ENCODE measurements at regions of chr3 and their contacts with region 1.

Region 1: GRCh38 chr3:184561061-184561912 is at the start of gene EPHB3:
- DNase-seq: peak; percentile 99
- H3K4me3 ChIP-seq: peak within 1 kb of the TSS; percentile 67
- H3K27ac ChIP-seq: no peak within 1 kb of the TSS
- H3K27me3 ChIP-seq: peaks cover 32% of the 10 kb centered on the region
- CTCF ChIP-seq: peak; percentile 100
- polyA plus RNA-seq, gene EPHB3: 1.9 TPM in 2 replicates

Region 2: DNA sequence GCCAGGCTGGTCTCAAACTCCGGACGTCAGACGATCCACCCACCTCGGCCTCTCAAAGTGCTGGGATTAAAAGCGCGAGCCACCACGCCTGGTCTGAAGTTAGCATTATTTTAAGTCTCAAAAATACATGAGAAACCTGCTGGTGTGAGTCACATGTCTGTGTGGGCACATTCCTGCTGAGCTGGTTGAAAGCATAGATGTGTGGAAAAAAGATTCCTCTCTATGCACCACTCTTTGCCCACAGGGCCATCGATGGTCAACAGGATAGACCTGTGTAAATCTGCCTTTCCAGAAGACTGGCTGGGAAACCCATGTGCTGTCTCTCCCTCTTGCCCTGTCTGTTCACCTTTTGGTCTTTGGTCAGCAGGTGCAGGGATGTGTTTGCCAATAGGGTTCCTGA is 117.9 kb before region 1 on chr3:
- CTCF ChIA-PET with region 1: no interaction called
- POLR2A ChIA-PET with region 1: no interaction called
- DNase-seq: no peak
- H3K4me3 ChIP-seq: no peak overlapping the region
- H3K27ac ChIP-seq: no peak overlapping the region
- H3K27me3 ChIP-seq: peaks cover 9% of the 10 kb centered on the region
- CTCF ChIP-seq: no peak

Region 3: GRCh38 chr3:184532940-184533732 is 28.2 kb before region 1 on chr3:
- CTCF ChIA-PET with region 1: no interaction called
- POLR2A ChIA-PET with region 1: no interaction called
- DNase-seq: no peak
- H3K4me3 ChIP-seq: no peak overlapping the region
- H3K27ac ChIP-seq: no peak overlapping the region
- H3K27me3 ChIP-seq: peaks cover 48% of the 10 kb centered on the region
- CTCF ChIP-seq: no peak

Region 4: DNA sequence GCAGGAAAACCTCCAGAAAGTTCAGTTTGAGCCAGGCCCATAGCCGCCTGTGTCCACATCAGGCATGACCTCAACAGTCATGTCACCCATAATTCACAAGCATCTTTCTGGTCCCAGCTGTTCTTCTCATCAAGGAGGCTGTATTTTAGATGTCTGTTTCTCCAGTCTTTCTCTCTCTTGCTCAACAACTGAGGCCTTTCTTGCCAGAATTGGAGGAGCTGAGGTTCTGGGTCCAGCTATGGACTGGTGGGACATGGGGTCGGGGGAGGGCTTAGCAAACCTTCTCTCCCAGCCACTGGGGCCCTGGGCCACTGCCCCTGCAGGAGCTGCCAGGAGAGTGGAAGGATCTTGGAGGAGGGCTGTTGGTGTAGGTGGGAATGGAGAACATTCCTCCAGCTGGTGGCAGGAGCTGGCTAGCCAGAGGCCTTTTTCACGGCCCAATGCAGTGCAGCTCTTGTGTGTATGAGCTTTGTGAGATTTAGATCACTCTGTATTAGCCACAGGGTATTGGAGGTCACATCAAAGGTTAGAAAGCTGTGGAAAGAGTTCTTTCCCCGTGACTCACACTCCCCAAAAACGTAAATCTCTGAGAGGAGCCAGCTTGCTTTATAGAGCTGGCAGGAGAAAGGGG is 127.1 kb after region 1 on chr3:
- CTCF ChIA-PET with region 1: interaction called, 19 read pairs
- POLR2A ChIA-PET with region 1: interaction called, 36 read pairs
- DNase-seq: peak; percentile 66
- H3K4me3 ChIP-seq: no peak overlapping the region
- H3K27ac ChIP-seq: peak overlapping the region; percentile 88
- H3K27me3 ChIP-seq: peaks cover 13% of the 10 kb centered on the region
- CTCF ChIP-seq: no peak

Region 5: GRCh38 chr3:184716622-184717398 is 155.5 kb after region 1 on chr3:
- CTCF ChIA-PET with region 1: interaction called, 14 read pairs
- POLR2A ChIA-PET with region 1: interaction called, 11 read pairs
- DNase-seq: no peak
- H3K4me3 ChIP-seq: no peak overlapping the region; the same call in 1 of the 2 replicates
- H3K27ac ChIP-seq: peak overlapping the region; percentile 55
- H3K27me3 ChIP-seq: no peaks in the 10 kb centered on the region
- CTCF ChIP-seq: no peak

Region 6: DNA sequence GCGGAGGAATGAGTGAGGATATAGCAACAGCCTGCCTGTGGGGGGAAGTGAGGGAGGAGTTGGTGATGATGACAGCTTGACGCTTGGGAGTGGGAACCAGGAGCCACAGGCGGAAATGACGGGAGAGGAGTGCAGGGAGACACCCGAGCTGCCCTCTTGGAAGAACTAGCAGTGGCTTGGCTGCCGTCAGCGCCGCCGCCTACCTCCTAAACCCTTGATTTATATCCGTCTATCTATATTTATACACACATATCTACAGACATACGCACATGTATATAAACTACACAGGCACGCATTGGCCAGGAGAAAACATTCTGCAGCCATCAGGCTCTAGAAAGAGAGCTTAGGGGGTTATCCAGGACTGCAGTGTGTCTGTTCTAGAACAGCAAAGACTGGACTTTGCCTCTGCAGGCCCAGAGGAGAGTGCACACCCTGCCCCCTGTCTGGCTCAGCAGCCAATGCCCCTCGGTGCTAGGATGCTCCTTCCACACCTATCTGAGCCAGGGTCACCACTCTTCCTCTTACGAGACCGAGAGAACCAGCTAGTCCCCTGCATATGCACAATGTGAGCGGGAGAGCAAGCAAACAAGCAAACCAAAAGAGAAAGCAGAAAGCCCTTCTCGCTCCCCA is 195.8 kb after region 1 on chr3:
- CTCF ChIA-PET with region 1: interaction called, 5 read pairs
- POLR2A ChIA-PET with region 1: interaction called, 12 read pairs
- DNase-seq: peak; percentile 95
- H3K4me3 ChIP-seq: peak overlapping the region; percentile 38
- H3K27ac ChIP-seq: peak overlapping the region; percentile 97
- H3K27me3 ChIP-seq: no peaks in the 10 kb centered on the region
- CTCF ChIP-seq: no peak

Region 7: DNA sequence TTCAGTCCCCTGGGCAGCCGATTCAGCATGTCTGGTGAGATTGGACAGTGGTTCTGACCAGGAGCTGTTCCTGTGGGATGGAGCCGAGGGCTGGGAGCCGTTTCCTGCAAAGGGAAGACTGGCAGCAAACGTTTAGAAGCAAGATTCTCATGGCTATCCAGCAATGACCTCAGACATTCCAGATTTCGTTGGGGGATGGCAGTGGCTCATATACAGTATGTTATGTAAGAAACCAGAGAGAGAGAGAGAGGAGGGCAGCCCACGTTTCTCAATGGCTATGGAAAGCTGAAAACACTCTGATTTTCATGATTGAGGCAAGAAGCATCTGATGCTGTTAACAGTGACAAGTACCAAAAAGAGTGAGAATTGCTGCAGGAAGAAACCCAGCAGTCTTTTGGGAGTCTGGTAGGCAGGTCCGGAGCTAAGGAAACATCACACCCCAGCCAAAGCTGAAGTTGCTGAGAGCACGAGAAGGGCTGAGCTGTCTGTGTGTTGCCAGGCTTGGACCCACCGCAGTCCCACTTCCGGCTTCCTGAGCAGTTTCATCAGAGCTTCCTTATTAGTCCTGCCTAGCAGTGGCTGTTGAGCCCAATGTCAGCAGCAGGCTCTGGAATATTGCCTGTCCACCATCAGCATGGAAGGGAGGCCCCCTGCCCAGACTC is 225.1 kb after region 1 on chr3:
- CTCF ChIA-PET with region 1: interaction called, 11 read pairs
- POLR2A ChIA-PET with region 1: interaction called, 4 read pairs
- DNase-seq: peak; percentile 74
- H3K4me3 ChIP-seq: peak overlapping the region; percentile 27
- H3K27ac ChIP-seq: peak overlapping the region; percentile 93
- H3K27me3 ChIP-seq: no peaks in the 10 kb centered on the region
- CTCF ChIP-seq: no peak